ENCODE measurements at regions of chr2 and their contacts with region 1.

Region 1: DNA sequence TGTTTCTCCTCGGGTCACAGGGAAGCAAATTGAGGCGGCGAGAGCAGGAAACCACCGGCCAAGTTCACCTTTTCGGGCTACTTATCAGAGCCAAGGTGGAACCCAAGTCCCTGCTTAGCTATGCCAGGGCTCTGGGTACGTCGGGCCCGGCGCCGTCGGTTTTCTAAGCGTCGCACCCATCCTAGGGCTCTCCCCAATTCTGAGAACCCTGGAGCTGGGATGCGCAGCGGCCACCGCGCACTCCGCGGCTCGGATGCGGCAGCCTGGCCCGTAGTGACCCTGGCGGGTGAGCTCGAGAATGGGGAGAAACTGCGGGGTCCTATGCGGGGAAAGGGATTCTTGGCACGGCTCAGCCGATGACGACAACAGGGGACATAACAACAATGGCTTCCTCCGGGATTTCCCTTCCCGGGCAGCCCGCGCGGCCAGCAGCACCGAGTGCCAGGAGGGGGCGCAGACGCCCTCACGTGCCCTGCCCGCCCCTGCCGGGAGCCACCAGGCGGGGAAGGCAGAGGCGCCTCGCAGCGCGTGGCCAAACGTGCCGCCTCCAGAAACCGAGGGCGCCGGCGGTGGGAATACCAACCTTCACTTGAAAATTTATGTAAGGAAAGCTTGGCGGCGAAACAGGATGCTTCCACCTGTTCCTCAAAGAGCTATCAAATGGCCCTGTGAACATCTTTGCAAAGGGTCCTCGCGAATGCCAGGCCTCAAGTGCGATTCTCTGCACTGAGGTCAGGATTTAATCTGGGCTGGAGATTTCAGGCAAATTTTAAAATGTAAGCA is 2.1 kb upstream of the SLC30A3 start:
- DNase-seq: peak; percentile 16
- H3K4me3 ChIP-seq: no peak overlapping the region
- CTCF ChIP-seq: peak; percentile 56

Region 2: DNA sequence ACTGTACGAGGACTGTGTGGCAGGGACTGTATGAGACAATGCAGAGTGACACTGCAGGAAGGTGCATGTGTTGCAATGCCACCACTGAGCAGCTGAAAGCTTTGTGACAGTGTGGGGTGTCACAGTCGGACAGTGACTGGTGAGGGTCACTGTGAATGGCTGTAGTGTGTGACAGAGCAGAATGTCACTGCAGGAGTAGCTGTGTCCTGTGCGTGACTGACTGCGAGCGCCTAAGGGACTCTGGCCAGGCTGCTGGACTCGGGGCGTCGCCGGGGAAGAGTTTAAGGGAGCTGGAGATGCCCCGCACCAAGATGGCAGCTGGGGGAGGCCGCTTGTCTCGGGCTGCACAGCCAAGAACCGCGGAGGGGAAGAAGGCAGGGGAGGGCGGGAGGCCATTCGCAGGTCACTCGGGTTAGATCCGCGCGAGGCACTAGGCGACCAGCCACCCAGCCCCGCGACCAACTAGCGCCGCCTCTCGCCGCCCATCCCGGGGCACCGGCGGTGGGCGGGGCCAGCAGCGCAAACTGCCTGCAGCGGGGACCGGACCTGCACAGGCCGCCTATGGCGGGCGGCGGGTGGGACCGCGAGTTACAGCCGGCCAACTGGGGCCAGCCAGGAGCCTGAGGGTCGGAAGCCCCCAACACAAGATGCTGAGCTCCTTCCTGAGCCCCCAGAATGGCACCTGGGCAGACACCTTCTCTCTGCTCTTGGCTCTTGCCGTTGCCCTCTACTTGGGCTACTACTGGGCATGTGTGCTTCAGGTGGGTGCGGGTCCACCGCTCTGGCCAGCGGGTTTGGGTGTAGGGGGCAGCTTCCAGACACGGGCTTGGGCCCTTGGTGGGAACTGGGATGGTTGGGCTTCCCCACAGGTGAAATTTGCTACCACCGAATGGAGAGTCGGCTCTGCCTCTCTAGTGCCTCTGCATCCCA is 141.4 kb before region 1 on chr2 and contains the start of gene ABHD1:
- in situ Hi-C with region 1: loop called (anchors 25 kb)
- DNase-seq: peak; percentile 1
- H3K4me3 ChIP-seq: peak within 1 kb of the TSS; percentile 47
- CTCF ChIP-seq: no peak

Region 3: GRCh38 chr2:27148801-27149439 is 116.0 kb before region 1 on chr2 and contains the start of gene TCF23:
- in situ Hi-C with region 1: no loop called
- DNase-seq: no peak
- H3K4me3 ChIP-seq: no peak within 1 kb of the TSS
- CTCF ChIP-seq: no peak